Body of pancreas (tissue), 4 donors: ENCODE measurements at regions of chr2 and their contacts with region 1.

Region 1: DNA sequence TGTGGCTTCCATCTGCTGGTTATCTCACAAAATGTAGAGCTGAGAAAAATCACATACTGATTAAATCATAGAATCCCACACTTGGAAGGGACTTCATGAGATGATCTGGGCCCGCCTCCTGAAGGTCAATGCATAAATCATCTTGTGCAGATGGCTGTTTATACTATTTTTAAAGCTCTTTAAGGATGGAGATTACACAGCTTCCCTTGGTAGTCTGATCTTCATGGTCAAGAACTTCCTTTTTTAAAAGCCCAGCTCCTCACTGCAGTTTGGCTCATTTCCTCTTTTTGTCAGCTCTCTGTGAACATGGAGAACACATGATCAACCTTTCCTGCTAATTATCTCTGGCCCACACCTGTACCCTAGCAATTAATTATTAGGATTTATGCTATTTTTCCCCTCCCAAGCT is 25.9 kb downstream of the GCG start:
- DNase-seq: no peak
- ATAC-seq: no peak
- H3K4me3 ChIP-seq: no peak overlapping the region
- H3K27ac ChIP-seq: no peak overlapping the region
- H3K4me1 ChIP-seq: no peaks in the 10 kb centered on the region
- H3K27me3 ChIP-seq: no peaks in the 10 kb centered on the region
- CTCF ChIP-seq: no peak
- POLR2A ChIP-seq: no peak

Region 2: GRCh38 chr2:161872052-161872451 is 254.1 kb before region 1 on chr2:
- intact Hi-C with region 1: no loop called
- DNase-seq: no peak
- ATAC-seq: no peak
- H3K4me3 ChIP-seq: no peak overlapping the region
- H3K27ac ChIP-seq: no peak overlapping the region
- H3K4me1 ChIP-seq: no peaks in the 10 kb centered on the region
- H3K27me3 ChIP-seq: no peaks in the 10 kb centered on the region
- CTCF ChIP-seq: no peak
- POLR2A ChIP-seq: no peak

Region 3: GRCh38 chr2:162007447-162008040 is 118.6 kb before region 1 on chr2:
- intact Hi-C with region 1: loop called (anchors 5 kb)
- DNase-seq: no peak
- ATAC-seq: no peak
- H3K4me3 ChIP-seq: no peak overlapping the region
- H3K27ac ChIP-seq: no peak overlapping the region
- H3K4me1 ChIP-seq: no peaks in the 10 kb centered on the region
- H3K27me3 ChIP-seq: no peaks in the 10 kb centered on the region
- CTCF ChIP-seq: peak; percentile 52 to 79 (median 67)
- POLR2A ChIP-seq: no peak

Region 4: GRCh38 chr2:162073888-162074645 is 52.0 kb before region 1 on chr2 and contains the start of gene DPP4:
- intact Hi-C with region 1: no loop called
- DNase-seq: peak; percentile 59 to 82 (median 68)
- ATAC-seq: peak; percentile 89
- H3K4me3 ChIP-seq: peak within 1 kb of the TSS; percentile 6 to 31
- H3K27ac ChIP-seq: peak within 1 kb of the TSS in 2 of 4 donors; percentile 26 to 42
- H3K4me1 ChIP-seq: peaks cover 13% of the 10 kb centered on the region
- H3K27me3 ChIP-seq: no peaks in the 10 kb centered on the region
- CTCF ChIP-seq: peak in 1 of 7 experiments; percentile 1
- POLR2A ChIP-seq: peak in 2 of 3 donors; percentile 18 to 43
- total RNA-seq, gene DPP4: 0.99 to 7.5 TPM

Region 5: DNA sequence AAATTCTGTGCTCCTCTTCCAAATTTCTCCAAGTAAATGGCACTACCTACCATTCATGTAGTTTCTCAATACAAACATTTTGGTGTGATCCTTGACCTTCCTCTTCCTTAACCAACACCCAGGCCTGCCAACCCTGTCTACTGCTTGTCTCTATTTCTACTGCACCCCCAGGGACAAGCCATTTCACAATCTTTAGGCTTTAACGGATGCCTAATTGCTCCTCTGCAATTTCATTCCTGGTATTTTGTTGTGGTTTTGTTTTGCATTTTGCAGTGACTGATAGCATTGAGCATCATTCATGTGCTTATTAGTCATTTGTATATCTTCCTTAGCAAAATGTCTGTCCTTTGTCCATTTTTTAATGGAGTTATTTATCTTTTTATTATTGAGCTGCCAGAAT is 107.1 kb after region 1 on chr2:
- intact Hi-C with region 1: no loop called
- DNase-seq: no peak
- ATAC-seq: no peak
- H3K4me3 ChIP-seq: no peak overlapping the region
- H3K27ac ChIP-seq: no peak overlapping the region
- H3K4me1 ChIP-seq: no peaks in the 10 kb centered on the region
- H3K27me3 ChIP-seq: no peaks in the 10 kb centered on the region
- CTCF ChIP-seq: no peak
- POLR2A ChIP-seq: no peak

Region 6: DNA sequence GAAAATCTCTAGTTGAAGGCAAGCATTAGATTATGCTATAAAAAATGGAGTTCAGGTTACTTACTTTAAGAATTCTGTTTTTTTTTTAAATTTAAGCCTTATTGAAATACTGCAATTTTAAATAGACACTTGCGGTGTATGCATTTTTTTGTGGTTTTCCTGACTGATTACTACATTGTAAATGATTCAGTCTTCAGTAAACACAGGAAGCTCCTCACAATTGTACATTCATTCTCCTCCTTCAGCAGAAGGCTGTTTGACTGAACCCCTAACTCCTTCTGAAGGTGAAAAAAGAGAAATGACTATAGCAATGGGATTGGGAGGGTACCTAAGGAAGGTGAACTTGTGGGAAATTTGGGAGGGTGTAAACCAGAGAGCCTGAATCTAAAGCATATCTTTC is 354.0 kb after region 1 on chr2:
- intact Hi-C with region 1: no loop called
- DNase-seq: no peak
- ATAC-seq: no peak
- H3K4me3 ChIP-seq: no peak overlapping the region
- H3K27ac ChIP-seq: no peak overlapping the region
- H3K4me1 ChIP-seq: peaks cover 27% of the 10 kb centered on the region
- H3K27me3 ChIP-seq: no peaks in the 10 kb centered on the region
- CTCF ChIP-seq: no peak
- POLR2A ChIP-seq: no peak